Cardiac septum (tissue), 1 donor: ENCODE measurements at regions of chr1 and their contacts with region 1.

Region 1: GRCh38 chr1:230917284-230918135 is 49.2 kb upstream of the C1orf198 start:
- DNase-seq: no peak

Region 2: GRCh38 chr1:230609208-230609607 is 308.3 kb before region 1 on chr1:
- intact Hi-C with region 1: no loop called
- DNase-seq: no peak

Region 3: GRCh38 chr1:230642263-230642959 is 275.1 kb before region 1 on chr1 and contains the start of gene COG2:
- intact Hi-C with region 1: loop called (anchors 10 kb)
- DNase-seq: peak; percentile 96
- total RNA-seq, gene COG2: 19.4 TPM

Region 4: GRCh38 chr1:230797942-230798418 is 119.5 kb before region 1 on chr1:
- intact Hi-C with region 1: loop called (anchors 1 kb)
- DNase-seq: no peak

Region 5: GRCh38 chr1:230957580-230957989 is 40.1 kb after region 1 on chr1:
- intact Hi-C with region 1: no loop called
- DNase-seq: no peak

Region 6: DNA sequence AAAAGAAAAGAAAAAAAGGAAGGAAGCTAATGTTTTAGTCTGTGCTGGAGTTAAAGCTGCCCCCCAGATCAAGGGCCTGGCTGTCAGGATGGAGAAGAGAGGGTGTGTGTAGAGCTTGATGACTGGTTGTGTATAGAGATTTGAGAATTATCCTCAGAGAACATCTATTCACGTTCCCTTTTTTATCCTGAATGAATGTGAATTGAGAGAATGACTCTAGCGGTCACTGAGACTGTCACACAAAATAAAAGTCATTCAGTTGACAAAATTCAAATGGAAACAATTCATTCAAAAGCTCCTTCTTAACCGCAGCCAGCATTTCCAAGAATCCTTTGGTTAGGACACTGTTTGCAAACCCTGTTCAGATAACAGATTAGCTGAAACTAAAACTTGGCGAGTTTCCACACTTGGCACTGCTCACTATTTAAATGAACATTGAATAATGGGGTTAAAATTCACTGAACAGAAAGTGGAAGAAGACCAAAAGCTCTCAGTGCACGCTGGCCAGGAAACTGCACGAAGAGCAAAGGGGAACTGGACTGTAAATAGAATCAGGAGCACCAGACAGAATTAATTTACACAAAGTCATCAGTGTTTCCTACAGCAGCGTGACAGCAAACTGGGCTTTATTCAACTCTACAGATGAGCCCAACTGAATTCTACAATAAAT is 136.1 kb after region 1 on chr1:
- intact Hi-C with region 1: no loop called
- DNase-seq: no peak